Activated CD4-positive, alpha-beta T cell treated with anti-CD3 and anti-CD28 coated beads for 36 hours (primary cell): ENCODE measurements at regions of chr17 and their contacts with region 1.

Region 1: GRCh38 chr17:40531051-40531991 is 29.9 kb upstream of the TNS4 start:
- DNase-seq: peak; percentile 95
- ATAC-seq: peak; percentile 81
- H3K4me3 Mint-ChIP-seq: peak overlapping the region; percentile 60
- H3K27ac Mint-ChIP-seq: peak overlapping the region; percentile 92
- H3K4me1 Mint-ChIP-seq: peaks cover 75% of the 10 kb centered on the region
- H3K27me3 Mint-ChIP-seq: no peaks in the 10 kb centered on the region

Region 2: GRCh38 chr17:40362696-40363110 is 168.6 kb before region 1 on chr17:
- CTCF ChIA-PET with region 1: interaction called, 150 read pairs
- POLR2A ChIA-PET with region 1: interaction called, 8 read pairs
- intact Hi-C with region 1: loop called (anchors 1 kb)
- DNase-seq: peak; percentile 95
- ATAC-seq: peak; percentile 91
- H3K4me3 Mint-ChIP-seq: peak overlapping the region; percentile 67
- H3K27ac Mint-ChIP-seq: no peak overlapping the region
- H3K4me1 Mint-ChIP-seq: peaks cover 20% of the 10 kb centered on the region
- H3K27me3 Mint-ChIP-seq: peaks cover 10% of the 10 kb centered on the region

Region 3: DNA sequence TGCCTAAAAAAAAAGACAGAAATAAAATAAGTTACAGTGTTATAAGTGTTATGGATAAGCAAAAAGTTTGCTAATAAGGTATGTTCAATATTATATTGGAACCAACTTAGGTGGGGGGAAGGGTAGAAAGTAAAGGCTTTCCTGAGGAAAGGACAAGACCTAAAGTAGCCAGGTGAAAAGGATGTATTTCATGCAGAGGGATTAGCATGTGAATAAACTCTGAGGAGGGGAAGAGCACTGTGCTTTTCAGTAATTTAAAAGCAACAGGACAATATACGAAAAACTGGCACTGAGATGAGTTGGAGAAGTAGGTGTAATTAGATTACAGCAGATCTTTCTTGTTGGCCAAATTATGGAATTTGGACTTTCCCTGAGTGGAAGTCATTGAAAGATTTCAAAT is 121.2 kb before region 1 on chr17:
- CTCF ChIA-PET with region 1: interaction called, 124 read pairs
- POLR2A ChIA-PET with region 1: interaction called, 6 read pairs
- intact Hi-C with region 1: no loop called
- DNase-seq: no peak
- ATAC-seq: no peak
- H3K4me3 Mint-ChIP-seq: no peak overlapping the region
- H3K27ac Mint-ChIP-seq: no peak overlapping the region
- H3K4me1 Mint-ChIP-seq: peaks cover under 1% of the 10 kb centered on the region
- H3K27me3 Mint-ChIP-seq: no peaks in the 10 kb centered on the region

Region 4: DNA sequence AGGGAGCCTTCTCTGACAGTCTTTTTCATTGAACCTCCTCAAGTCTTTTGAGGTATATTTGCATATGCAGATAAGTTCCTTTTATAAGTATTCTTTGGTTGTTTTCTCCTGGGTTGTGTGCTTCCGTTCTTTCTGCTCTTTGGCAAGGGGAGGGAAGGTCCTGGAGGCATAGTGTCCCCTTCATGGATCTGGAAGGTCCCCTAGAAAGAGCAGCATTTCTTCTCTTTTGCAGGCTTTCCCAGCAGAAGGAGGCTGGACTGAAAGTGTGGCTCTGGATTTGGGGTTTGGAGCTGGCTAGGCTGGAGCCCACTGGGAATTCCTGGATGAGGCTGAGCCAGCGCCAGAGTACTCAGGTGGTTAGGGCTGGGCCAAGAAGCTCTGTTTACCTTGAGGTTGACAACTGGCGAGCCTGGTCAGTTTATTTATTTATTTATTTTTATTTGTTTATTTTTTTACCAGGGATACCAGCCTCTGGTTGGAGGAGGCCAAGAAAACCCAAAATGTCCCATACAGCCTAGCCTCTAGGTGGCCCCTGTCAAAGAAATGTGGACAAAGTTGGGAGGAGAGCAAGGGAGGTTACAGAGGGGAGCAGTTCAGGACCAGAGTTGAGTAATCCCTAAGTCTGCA is 108.2 kb before region 1 on chr17:
- CTCF ChIA-PET with region 1: interaction called, 124 read pairs
- POLR2A ChIA-PET with region 1: interaction called, 41 read pairs
- intact Hi-C with region 1: loop called in 1 of 2 experiments (anchors 2 kb)
- DNase-seq: no peak
- ATAC-seq: no peak
- H3K4me3 Mint-ChIP-seq: no peak overlapping the region
- H3K27ac Mint-ChIP-seq: no peak overlapping the region
- H3K4me1 Mint-ChIP-seq: peaks cover 43% of the 10 kb centered on the region
- H3K27me3 Mint-ChIP-seq: no peaks in the 10 kb centered on the region

Region 5: GRCh38 chr17:40443583-40444327 is 87.6 kb before region 1 on chr17:
- CTCF ChIA-PET with region 1: interaction called, 21 read pairs
- POLR2A ChIA-PET with region 1: interaction called, 6 read pairs
- intact Hi-C with region 1: loop called (anchors 1 to 2 kb)
- DNase-seq: peak; percentile 83
- ATAC-seq: peak; percentile 68
- H3K4me3 Mint-ChIP-seq: peak overlapping the region; percentile 70
- H3K27ac Mint-ChIP-seq: peak overlapping the region; percentile 88
- H3K4me1 Mint-ChIP-seq: peaks cover 45% of the 10 kb centered on the region
- H3K27me3 Mint-ChIP-seq: peaks cover 5% of the 10 kb centered on the region

Region 6: DNA sequence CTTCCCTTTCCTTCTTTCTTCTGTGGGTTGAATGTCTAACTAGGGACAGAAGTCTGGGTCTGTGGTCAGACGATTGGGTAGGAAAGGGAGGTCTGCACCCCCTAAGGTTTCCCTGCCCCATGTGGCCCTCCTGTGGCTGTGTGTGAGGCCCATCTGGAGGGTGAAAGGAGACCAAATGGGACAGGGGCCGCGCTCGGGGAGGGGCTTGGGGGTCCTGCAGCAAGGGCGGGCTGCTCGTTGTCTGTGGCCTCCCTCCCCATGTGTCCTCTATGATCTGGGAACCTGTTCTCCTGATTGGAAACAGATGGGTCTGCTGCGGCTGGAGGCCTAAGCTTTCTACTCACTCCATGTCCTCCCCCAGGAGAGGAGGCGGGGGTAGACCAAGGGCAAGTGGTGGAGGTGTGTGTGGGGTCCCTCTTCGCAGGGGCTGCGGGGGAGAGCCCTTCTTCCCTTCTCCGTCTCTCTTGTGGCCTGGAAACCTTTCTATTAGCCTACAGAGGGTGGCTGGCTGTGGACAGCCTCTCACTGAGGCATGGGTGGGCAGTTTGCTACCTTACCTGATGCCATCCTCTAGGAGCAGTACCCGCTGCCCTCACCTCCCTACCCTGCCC is 69.5 kb before region 1 on chr17:
- CTCF ChIA-PET with region 1: no interaction called
- POLR2A ChIA-PET with region 1: no interaction called
- intact Hi-C with region 1: no loop called
- DNase-seq: no peak
- ATAC-seq: peak; percentile 10
- H3K4me3 Mint-ChIP-seq: no peak overlapping the region
- H3K27ac Mint-ChIP-seq: no peak overlapping the region
- H3K4me1 Mint-ChIP-seq: no peaks in the 10 kb centered on the region
- H3K27me3 Mint-ChIP-seq: no peaks in the 10 kb centered on the region

Region 7: GRCh38 chr17:40490289-40490853 is 41.0 kb before region 1 on chr17:
- CTCF ChIA-PET with region 1: interaction called, 10 read pairs
- POLR2A ChIA-PET with region 1: interaction called, 3 read pairs
- intact Hi-C with region 1: loop called in 1 of 2 experiments (anchors 1 kb)
- DNase-seq: peak; percentile 65
- ATAC-seq: peak; percentile 55
- H3K4me3 Mint-ChIP-seq: no peak overlapping the region
- H3K27ac Mint-ChIP-seq: peak overlapping the region; percentile 61
- H3K4me1 Mint-ChIP-seq: peaks cover 56% of the 10 kb centered on the region
- H3K27me3 Mint-ChIP-seq: no peaks in the 10 kb centered on the region

Region 8: GRCh38 chr17:40502711-40503110 is 28.6 kb before region 1 on chr17:
- CTCF ChIA-PET with region 1: no interaction called
- POLR2A ChIA-PET with region 1: no interaction called
- intact Hi-C with region 1: no loop called
- DNase-seq: no peak
- ATAC-seq: no peak
- H3K4me3 Mint-ChIP-seq: no peak overlapping the region
- H3K27ac Mint-ChIP-seq: peak overlapping the region; percentile 34
- H3K4me1 Mint-ChIP-seq: peaks cover 2% of the 10 kb centered on the region
- H3K27me3 Mint-ChIP-seq: peaks cover 4% of the 10 kb centered on the region

Region 9: GRCh38 chr17:40516581-40517285 is 14.6 kb before region 1 on chr17:
- CTCF ChIA-PET with region 1: interaction called, 35 read pairs
- POLR2A ChIA-PET with region 1: interaction called, 7 read pairs
- intact Hi-C with region 1: loop called (anchors 1 to 2 kb)
- DNase-seq: peak; percentile 77
- ATAC-seq: peak; percentile 76
- H3K4me3 Mint-ChIP-seq: peak overlapping the region; percentile 76
- H3K27ac Mint-ChIP-seq: peak overlapping the region; percentile 73
- H3K4me1 Mint-ChIP-seq: peaks cover 57% of the 10 kb centered on the region
- H3K27me3 Mint-ChIP-seq: peaks cover 2% of the 10 kb centered on the region